ENCODE measurements at regions of chr16 and their contacts with region 1.

Region 1: GRCh38 chr16:2874912-2875362 is 8.1 kb upstream of the FLYWCH2 start:
- DNase-seq: peak; percentile 59 to 83 (median 72)
- H3K4me3 ChIP-seq: peak overlapping the region in 15 of 59 donors; percentile 2 to 35 (median 16)
- H3K27ac ChIP-seq: peak overlapping the region in 7 of 59 donors; percentile 16 to 46 (median 39)
- H3K27me3 ChIP-seq: no peaks in the 10 kb centered on the region
- CTCF ChIP-seq: peak; percentile 81 to 97 (median 92)

Region 2: GRCh38 chr16:2710711-2711231 is 164.2 kb before region 1 on chr16:
- intact Hi-C with region 1: no loop called
- DNase-seq: peak; percentile 37 to 90 (median 80)
- H3K4me3 ChIP-seq: no peak overlapping the region
- H3K27ac ChIP-seq: peak overlapping the region in 18 of 59 donors; percentile 4 to 83 (median 44)
- H3K27me3 ChIP-seq: no peaks in the 10 kb centered on the region
- CTCF ChIP-seq: no peak

Region 3: GRCh38 chr16:2911580-2912329 is 36.8 kb after region 1 on chr16 and contains the start of gene FLYWCH1:
- intact Hi-C with region 1: loop called in 1 of 2 experiments (anchors 5 kb)
- DNase-seq: peak; percentile 97 to 99 (median 98)
- H3K4me3 ChIP-seq: peak within 1 kb of the TSS; percentile 67 to 96 (median 86)
- H3K27ac ChIP-seq: peak within 1 kb of the TSS; percentile 17 to 94 (median 87)
- H3K27me3 ChIP-seq: no peaks in the 10 kb centered on the region
- CTCF ChIP-seq: peak in 41 of 56 donors; percentile 3 to 67 (median 33)
- total RNA-seq, gene FLYWCH1: 55.0 to 127 (median 86.7) TPM